Gastrocnemius medialis (tissue), 4 donors: ENCODE measurements at regions of chr12 and their contacts with region 1.

Region 1: GRCh38 chr12:124388679-124389536 is 94.0 kb downstream of the RFLNA start:
- DNase-seq: peak; percentile 84 to 88
- ATAC-seq: peak; percentile 36 to 37
- H3K4me3 ChIP-seq: peak overlapping the region; percentile 56 to 86 (median 72)
- H3K27ac ChIP-seq: peak overlapping the region; percentile 93 to 98 (median 96)
- H3K4me1 ChIP-seq: peaks cover 75 to 80% of the 10 kb centered on the region in 2 donors
- H3K27me3 ChIP-seq: no peaks in the 10 kb centered on the region
- CTCF ChIP-seq: no peak
- POLR2A ChIP-seq: peak; percentile 80

Region 2: DNA sequence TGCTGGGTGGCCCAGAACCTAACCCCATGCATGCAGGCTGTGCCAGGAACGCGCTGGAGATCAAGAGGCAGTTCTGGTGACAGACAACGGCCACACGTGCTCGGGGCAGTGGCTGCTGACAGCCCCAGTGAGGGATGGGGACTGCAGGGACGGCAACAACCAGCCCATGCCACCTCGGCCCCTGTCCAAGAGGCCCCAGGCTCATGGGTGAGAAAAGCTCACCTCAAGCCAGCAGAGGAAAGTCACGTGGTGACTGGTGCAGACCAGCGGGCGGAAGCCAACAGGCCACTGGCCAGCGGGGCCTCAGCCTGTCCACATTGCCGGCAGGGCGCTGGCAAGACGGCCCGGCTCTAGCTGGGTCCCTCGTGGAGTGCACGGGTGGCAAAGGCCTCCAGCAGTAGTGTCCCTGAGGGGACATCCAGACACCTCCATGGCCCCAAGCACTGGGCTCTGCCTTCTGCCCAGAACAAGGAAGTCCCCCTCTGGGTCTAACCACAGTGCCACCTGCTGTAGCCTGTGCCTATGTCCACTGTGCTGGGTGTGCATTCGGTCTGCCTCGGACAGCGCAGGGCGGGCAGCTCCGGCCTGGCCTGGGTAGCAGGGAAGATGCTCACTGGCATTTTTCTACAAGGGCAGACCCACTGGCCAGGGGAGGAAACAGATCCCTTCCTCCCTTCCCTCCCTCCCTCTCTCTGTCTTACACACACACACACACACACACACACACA is 44.4 kb after region 1 on chr12:
- in situ Hi-C with region 1: no loop called
- intact Hi-C with region 1: loop called (anchors 2 kb)
- DNase-seq: peak; percentile 95 to 97
- ATAC-seq: peak; percentile 80 to 82
- H3K4me3 ChIP-seq: no peak overlapping the region
- H3K27ac ChIP-seq: peak overlapping the region; percentile 81 to 87 (median 85)
- H3K4me1 ChIP-seq: peaks cover 24 to 25% of the 10 kb centered on the region in 2 donors
- H3K27me3 ChIP-seq: no peaks in the 10 kb centered on the region
- CTCF ChIP-seq: peak in 4 of 5 experiments; percentile 15 to 41 (median 39)
- POLR2A ChIP-seq: peak; percentile 25 to 39

Region 3: DNA sequence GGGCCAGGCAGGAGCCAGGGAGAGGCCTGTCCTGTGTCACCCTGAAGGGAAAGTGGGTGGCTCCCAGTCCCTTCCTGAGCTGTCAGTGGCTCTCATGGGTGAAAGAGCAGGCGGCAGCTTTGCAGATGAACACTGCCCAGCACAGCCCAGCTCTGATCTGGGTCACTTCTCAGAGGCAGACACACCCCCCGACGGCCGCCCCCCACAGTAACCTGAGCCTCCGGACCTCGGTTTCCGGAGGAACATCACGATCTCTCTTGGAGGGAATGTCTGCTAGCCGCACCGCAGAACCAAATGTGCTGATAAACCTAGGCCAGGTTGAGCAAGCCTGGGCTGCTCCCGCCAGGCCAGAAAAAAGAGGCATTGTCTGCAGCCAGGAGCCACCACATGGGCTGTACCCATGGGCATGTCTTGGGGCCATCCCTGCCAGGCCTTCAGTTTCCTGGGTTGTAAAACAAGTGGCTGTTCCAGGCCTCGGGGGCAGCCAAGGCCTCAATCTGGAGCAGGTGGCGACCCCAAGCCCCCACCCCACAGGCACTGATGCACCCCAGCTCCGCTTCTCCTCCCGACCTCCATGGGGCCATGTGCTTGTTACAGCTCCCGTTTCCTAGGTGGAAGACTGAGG is 120.9 kb after region 1 on chr12:
- in situ Hi-C with region 1: loop called in 1 of 4 experiments (anchors 25 kb)
- intact Hi-C with region 1: loop called (anchors 2 kb)
- DNase-seq: peak; percentile 93 to 95
- ATAC-seq: peak; percentile 78 to 82
- H3K4me3 ChIP-seq: peak overlapping the region in 1 of 4 donors; percentile 8
- H3K27ac ChIP-seq: peak overlapping the region; percentile 86 to 98 (median 92)
- H3K4me1 ChIP-seq: peaks cover 74 to 89% of the 10 kb centered on the region in 2 donors
- H3K27me3 ChIP-seq: no peaks in the 10 kb centered on the region
- CTCF ChIP-seq: no peak
- POLR2A ChIP-seq: peak; percentile 73 to 83

Region 4: DNA sequence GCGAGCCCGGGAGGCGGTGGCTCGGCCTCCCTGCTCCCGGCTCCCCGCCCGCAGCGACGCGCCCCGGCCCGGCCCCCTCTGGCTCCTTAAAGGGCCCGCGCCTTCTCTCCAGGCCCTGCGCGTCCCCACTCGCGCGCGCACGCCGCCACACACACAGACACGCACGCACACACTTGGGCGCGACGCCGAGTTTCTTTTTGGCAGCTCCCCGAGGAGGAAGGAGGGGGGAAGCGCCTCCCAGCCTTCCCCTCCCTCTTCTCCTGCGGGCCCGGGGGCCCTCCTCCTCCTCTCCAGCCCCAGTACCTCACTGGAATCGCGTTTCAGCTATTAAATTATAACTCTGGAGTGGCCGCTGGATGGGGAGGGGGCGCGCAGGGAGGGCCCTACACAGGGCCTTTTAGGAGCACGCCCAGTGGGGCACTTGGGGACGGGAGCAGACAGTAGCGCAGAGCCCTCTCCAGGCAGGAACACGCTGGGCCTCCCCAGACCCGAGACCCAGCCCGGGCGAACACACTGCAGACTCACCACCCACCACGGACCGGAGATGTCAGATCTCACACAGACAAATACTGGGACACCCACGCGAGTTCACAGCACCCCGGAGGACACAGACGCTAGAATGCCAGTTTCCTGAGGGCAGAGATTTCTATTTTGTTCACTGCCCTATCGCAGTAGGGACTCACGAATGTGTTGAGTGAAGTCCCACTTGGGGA is 178.9 kb after region 1 on chr12:
- in situ Hi-C with region 1: no loop called
- intact Hi-C with region 1: loop called (anchors 5 kb)
- DNase-seq: peak; percentile 81 to 86
- ATAC-seq: peak; percentile 76 to 79
- H3K4me3 ChIP-seq: peak overlapping the region; percentile 58 to 93 (median 68)
- H3K27ac ChIP-seq: peak overlapping the region; percentile 91 to 98 (median 93)
- H3K4me1 ChIP-seq: peaks cover 27 to 38% of the 10 kb centered on the region in 2 donors
- H3K27me3 ChIP-seq: no peaks in the 10 kb centered on the region
- CTCF ChIP-seq: peak in 2 of 5 experiments; percentile 11 to 30
- POLR2A ChIP-seq: no peak

Region 5: DNA sequence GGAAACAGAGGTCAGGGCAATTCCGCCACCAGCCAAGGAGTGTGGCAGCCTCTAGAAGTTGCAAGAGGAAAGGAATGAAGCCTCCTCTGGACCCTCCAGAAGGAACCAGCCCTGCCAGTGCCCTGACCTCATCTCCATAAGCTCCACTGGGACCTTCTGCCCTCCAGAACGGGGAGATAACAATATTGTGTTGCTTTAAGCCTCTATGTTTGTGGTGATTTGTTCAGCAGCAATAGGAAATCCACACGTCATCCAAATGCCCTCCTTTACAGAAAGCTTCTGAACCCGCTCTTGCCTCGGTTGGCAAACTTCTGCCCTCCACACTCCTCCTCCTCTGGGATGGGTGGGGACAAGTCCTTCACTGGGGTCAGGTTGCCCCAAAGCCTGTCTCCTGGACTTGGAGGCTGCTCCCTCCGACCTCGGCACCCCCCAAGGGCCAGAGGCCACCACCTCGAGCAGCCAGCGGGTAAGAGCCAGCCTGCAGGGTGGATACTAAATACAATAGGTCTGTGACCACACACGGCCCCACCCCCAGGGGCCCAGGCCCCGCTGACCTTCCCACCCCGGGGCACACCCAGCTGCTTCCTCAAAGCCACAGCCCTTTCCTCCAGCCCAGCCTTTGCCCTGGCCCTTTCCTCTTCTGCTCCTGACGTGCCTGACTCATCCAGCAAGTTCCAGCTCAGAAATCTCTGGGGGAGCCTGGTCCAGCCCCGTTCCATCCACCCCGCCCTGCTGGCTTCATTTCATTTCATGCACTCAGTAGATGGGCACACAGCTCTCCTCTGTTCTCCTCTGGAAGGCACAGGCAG is 237.2 kb after region 1 on chr12:
- in situ Hi-C with region 1: no loop called
- intact Hi-C with region 1: no loop called
- DNase-seq: peak; percentile 72 to 81
- ATAC-seq: peak; percentile 81 to 82
- H3K4me3 ChIP-seq: no peak overlapping the region
- H3K27ac ChIP-seq: peak overlapping the region; percentile 72 to 85 (median 74)
- H3K4me1 ChIP-seq: peaks cover 18 to 27% of the 10 kb centered on the region in 2 donors
- H3K27me3 ChIP-seq: no peaks in the 10 kb centered on the region
- CTCF ChIP-seq: no peak
- POLR2A ChIP-seq: peak; percentile 7 to 22